MCF 10A (cell line): ENCODE measurements at regions of chr2 and their contacts with region 1.

Region 1: DNA sequence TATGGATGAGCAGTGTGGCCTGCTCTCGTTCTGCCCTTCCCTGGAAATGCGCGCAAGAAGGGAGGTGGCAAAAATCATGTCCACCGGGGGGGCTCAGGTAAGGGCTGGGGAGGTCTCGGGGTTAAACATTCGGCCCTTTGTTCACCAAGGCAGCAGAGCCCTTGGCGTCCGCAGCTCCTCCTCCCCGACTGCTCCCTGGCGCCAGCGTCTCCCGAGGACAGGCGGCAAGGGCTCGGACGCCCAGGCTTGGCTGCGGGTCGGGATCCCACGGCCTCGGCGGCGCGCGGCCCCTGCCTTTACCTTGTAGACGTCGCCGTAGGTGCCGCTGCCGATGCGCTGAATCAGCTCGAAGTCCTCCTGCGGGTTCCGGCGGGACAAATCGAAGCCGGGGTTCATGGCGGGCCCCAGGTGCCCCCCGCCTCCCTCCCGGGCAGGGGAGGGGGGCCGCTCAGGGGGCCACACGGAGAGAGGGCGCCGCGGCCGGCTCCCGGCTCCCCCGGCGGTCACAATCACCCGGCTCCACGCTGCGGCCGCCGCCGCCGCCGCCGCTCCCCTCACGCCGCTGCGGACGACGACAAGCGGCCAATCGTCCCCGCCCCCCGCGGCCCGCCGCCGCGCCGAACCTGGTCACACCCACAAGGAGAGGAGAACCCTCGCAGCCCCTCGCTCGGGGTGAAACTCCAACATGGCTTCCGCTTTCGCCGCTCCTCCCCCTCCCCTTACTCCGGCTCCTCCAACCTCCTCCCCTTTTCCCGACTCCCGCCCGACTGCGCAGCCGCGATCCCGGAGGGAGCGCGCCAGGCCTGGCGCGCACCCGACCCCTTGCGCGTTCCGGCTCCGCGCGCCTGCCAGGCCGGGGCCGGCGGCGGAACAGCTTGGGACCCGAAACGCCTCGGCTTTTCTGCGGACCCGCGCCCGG is at the start of gene MAP4K3:
- DNase-seq: peak; percentile 95
- H3K4me3 Mint-ChIP-seq: peak within 1 kb of the TSS; percentile 72
- H3K27ac Mint-ChIP-seq: peak within 1 kb of the TSS; percentile 97
- H3K4me1 Mint-ChIP-seq: peaks cover 32% of the 10 kb centered on the region
- H3K27me3 Mint-ChIP-seq: no peaks in the 10 kb centered on the region
- CTCF ChIP-seq: no peak
- total RNA-seq, gene MAP4K3: 30.2 and 36.0 TPM in 2 replicates

Region 2: DNA sequence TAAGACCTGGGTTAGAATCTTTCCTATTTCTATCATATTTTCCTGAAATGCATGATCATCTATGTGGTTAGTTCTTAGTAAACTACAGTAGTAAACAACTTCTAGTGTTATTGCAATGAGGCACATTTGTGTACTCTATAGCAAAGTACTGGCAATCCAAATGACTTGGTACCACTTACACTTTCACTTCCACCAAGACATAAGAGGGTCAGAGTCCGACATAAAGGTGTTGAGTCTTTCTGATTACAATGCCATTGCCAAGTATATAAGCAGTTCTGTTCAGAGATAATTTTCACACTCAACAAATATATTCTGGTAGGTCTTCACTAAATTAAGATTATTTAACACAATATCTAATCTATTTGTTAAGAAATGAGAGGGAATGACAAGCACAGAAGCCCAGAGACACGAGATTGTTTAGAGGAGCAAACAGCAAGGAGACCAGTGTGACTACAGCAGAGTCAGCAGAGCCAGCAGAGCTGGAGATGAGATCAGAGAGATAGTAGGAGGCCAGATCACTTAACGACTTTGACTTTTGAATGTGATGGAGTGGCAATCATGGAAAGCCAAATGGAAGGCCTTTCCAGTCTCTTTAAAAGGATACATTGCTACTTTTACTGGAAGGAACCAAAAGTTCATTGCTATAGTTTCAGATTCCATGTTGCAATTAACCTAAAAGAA is 343.5 kb before region 1 on chr2:
- CTCF ChIA-PET with region 1: no interaction called
- POLR2A ChIA-PET with region 1: no interaction called
- intact Hi-C with region 1: no loop called
- DNase-seq: no peak
- H3K4me3 Mint-ChIP-seq: no peak overlapping the region
- H3K27ac Mint-ChIP-seq: peak overlapping the region; percentile 57
- H3K4me1 Mint-ChIP-seq: peaks cover 21% of the 10 kb centered on the region
- H3K27me3 Mint-ChIP-seq: no peaks in the 10 kb centered on the region
- CTCF ChIP-seq: no peak

Region 3: DNA sequence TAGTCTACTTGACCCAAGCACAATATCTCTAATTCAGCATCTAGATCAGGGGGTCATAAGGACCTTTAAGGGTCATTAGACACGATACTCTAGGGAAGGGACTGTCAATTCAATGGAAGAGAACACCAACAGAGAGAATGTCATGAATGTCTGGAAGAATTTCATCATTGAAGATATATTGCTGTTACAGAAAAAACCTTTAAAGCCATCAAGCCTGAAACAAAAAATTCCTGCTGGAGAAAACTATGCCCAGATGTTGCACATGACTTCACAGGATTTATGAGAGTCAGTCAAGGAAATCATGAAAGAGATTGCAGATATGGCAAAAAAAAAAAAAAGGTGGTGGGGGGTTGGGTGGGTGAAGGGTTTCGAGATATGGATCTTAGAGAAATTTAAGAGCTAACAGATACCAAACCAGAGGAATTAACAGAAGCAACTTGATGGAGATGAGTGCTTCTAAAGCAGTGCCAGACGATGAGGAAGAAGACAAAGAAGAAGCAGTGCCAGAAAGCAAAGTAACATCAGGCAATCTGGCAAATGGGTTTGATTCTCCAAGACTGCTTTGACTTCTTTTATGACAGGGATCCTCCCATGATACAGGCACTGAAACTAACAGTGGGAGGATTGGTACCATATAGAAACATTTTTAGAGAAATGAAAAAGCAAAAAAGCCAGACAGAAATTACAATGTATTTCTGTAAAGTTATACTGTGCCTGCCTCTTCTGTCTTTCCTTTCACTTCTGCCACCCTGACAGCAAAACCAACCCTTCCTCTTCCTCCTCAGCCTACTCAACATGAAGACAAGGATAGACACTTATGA is 28.3 kb before region 1 on chr2:
- CTCF ChIA-PET with region 1: interaction called, 4 read pairs
- POLR2A ChIA-PET with region 1: interaction called, 21 read pairs
- intact Hi-C with region 1: no loop called
- DNase-seq: no peak
- H3K4me3 Mint-ChIP-seq: no peak overlapping the region
- H3K27ac Mint-ChIP-seq: peak overlapping the region; percentile 59
- H3K4me1 Mint-ChIP-seq: peaks cover 47% of the 10 kb centered on the region
- H3K27me3 Mint-ChIP-seq: no peaks in the 10 kb centered on the region
- CTCF ChIP-seq: no peak

Region 4: DNA sequence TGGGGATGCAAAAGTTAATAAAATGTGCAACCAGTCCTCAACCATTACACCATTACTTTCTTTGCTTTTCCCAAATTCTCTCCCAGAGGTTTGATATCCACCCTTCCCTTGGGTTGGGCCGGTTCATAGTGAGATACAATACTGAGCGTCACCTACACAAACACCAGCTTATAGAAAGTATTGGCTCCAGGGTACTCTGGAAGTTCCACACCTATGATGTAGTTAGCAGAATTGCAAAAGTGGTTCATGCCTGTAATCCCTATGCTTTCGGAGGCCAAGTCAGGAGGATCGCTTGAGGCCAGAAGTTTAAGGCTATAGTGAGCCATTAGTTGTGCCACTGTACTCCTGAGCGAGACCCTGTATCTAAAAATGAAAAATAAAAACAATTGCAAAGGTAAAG is 15.5 kb after region 1 on chr2:
- CTCF ChIA-PET with region 1: no interaction called
- POLR2A ChIA-PET with region 1: interaction called, 13 read pairs
- intact Hi-C with region 1: no loop called
- DNase-seq: no peak
- H3K4me3 Mint-ChIP-seq: no peak overlapping the region
- H3K27ac Mint-ChIP-seq: no peak overlapping the region
- H3K4me1 Mint-ChIP-seq: no peaks in the 10 kb centered on the region
- H3K27me3 Mint-ChIP-seq: no peaks in the 10 kb centered on the region
- CTCF ChIP-seq: no peak

Region 5: DNA sequence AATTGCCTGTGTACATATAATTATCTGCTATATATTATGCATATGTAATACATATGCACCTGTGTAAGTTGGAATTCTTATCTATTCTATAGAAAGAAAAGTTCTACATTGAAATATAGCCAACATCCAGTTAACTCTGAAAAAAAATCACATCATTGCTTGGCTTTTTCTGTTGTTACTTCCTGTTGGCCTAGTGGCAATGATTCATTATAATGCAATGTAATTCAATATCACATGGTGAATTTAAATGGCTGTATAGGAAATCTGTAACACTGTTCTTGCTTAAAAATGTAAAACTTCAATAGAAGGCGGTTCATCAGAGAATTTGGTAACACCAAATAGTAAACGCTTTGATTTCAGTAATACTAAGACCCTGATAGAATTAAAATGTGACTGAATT is 44.8 kb after region 1 on chr2:
- CTCF ChIA-PET with region 1: no interaction called
- POLR2A ChIA-PET with region 1: interaction called, 12 read pairs
- intact Hi-C with region 1: loop called (anchors 5 kb)
- DNase-seq: peak; percentile 44
- H3K4me3 Mint-ChIP-seq: no peak overlapping the region
- H3K27ac Mint-ChIP-seq: no peak overlapping the region
- H3K4me1 Mint-ChIP-seq: no peaks in the 10 kb centered on the region
- H3K27me3 Mint-ChIP-seq: no peaks in the 10 kb centered on the region
- CTCF ChIP-seq: no peak

Region 6: DNA sequence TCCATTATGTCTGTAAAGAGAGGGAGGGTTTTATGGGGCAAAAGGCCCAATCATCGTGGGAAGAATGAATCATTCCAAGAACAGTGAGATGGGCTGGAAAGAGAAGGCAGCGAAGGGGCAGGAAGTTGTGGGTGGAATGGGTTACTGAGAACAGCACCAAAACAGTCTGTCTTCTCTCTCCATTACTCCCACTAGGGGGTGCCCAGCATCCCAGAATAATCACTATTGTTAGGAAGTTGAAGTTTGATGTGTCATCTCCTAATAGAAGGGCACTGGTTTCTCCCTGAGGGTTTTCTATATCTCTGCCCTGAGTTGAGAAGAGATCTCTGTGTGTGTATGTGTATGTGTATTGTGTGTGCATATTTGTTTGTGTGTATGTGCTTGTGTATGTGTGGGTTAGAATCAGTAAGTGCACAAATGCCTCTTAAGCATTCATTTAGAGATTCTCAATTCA is 76.8 kb after region 1 on chr2:
- CTCF ChIA-PET with region 1: interaction called, 4 read pairs
- POLR2A ChIA-PET with region 1: interaction called, 9 read pairs
- intact Hi-C with region 1: loop called (anchors 5 kb)
- DNase-seq: peak; percentile 92
- H3K4me3 Mint-ChIP-seq: no peak overlapping the region
- H3K27ac Mint-ChIP-seq: peak overlapping the region; percentile 90
- H3K4me1 Mint-ChIP-seq: peaks cover 30% of the 10 kb centered on the region
- H3K27me3 Mint-ChIP-seq: no peaks in the 10 kb centered on the region
- CTCF ChIP-seq: peak; percentile 55